MCF 10A (cell line): ENCODE measurements at regions of chr12 and their contacts with region 1.

Region 1: GRCh38 chr12:45543906-45544315 is 185.6 kb upstream of the ARID2 start:
- DNase-seq: peak; percentile 81
- H3K4me3 Mint-ChIP-seq: no peak overlapping the region
- H3K27ac Mint-ChIP-seq: no peak overlapping the region
- H3K4me1 Mint-ChIP-seq: no peaks in the 10 kb centered on the region
- H3K27me3 Mint-ChIP-seq: no peaks in the 10 kb centered on the region
- CTCF ChIP-seq: peak; percentile 83

Region 2: GRCh38 chr12:45490213-45490873 is 53.6 kb before region 1 on chr12:
- CTCF ChIA-PET with region 1: no interaction called
- POLR2A ChIA-PET with region 1: no interaction called
- intact Hi-C with region 1: no loop called
- DNase-seq: no peak
- H3K4me3 Mint-ChIP-seq: no peak overlapping the region
- H3K27ac Mint-ChIP-seq: no peak overlapping the region
- H3K4me1 Mint-ChIP-seq: no peaks in the 10 kb centered on the region
- H3K27me3 Mint-ChIP-seq: no peaks in the 10 kb centered on the region
- CTCF ChIP-seq: no peak

Region 3: GRCh38 chr12:45532113-45532512 is 11.8 kb before region 1 on chr12:
- CTCF ChIA-PET with region 1: interaction called, 20 read pairs
- POLR2A ChIA-PET with region 1: interaction called, 3 read pairs
- intact Hi-C with region 1: no loop called
- DNase-seq: no peak
- H3K4me3 Mint-ChIP-seq: no peak overlapping the region
- H3K27ac Mint-ChIP-seq: no peak overlapping the region
- H3K4me1 Mint-ChIP-seq: no peaks in the 10 kb centered on the region
- H3K27me3 Mint-ChIP-seq: no peaks in the 10 kb centered on the region
- CTCF ChIP-seq: no peak

Region 4: GRCh38 chr12:45703942-45704341 is 160.0 kb after region 1 on chr12:
- CTCF ChIA-PET with region 1: interaction called, 11 read pairs
- POLR2A ChIA-PET with region 1: no interaction called
- intact Hi-C with region 1: no loop called
- DNase-seq: peak; percentile 24
- H3K4me3 Mint-ChIP-seq: no peak overlapping the region
- H3K27ac Mint-ChIP-seq: no peak overlapping the region
- H3K4me1 Mint-ChIP-seq: peaks cover 5% of the 10 kb centered on the region
- H3K27me3 Mint-ChIP-seq: no peaks in the 10 kb centered on the region
- CTCF ChIP-seq: no peak

Region 5: DNA sequence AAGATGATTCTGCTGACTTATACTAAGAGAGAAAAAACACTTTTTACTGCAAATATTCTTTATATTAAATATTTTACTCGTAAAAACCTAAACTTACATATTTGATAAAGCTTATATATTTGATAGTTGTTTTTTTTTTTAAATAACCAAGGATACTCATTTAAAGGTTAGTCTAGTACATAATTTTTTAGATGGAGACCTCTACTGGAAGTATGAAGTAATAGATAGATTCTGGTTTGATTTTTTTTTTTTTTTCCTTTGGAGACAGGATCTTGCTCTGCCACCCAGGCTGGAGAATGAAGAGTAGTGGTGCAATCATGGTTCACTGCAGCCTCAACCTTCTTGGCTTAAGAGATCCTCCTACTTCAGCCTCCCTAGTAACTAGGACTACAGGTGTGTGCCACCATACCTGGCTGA is 202.0 kb after region 1 on chr12:
- CTCF ChIA-PET with region 1: interaction called, 44 read pairs
- POLR2A ChIA-PET with region 1: interaction called, 3 read pairs
- intact Hi-C with region 1: loop called (anchors 2 kb)
- DNase-seq: peak; percentile 27
- H3K4me3 Mint-ChIP-seq: no peak overlapping the region
- H3K27ac Mint-ChIP-seq: no peak overlapping the region
- H3K4me1 Mint-ChIP-seq: no peaks in the 10 kb centered on the region
- H3K27me3 Mint-ChIP-seq: no peaks in the 10 kb centered on the region
- CTCF ChIP-seq: peak; percentile 19

Region 6: GRCh38 chr12:45907955-45908354 is 364.0 kb after region 1 on chr12:
- CTCF ChIA-PET with region 1: no interaction called
- POLR2A ChIA-PET with region 1: no interaction called
- intact Hi-C with region 1: loop called (anchors 10 kb)
- DNase-seq: no peak
- H3K4me3 Mint-ChIP-seq: no peak overlapping the region
- H3K27ac Mint-ChIP-seq: no peak overlapping the region
- H3K4me1 Mint-ChIP-seq: no peaks in the 10 kb centered on the region
- H3K27me3 Mint-ChIP-seq: no peaks in the 10 kb centered on the region
- CTCF ChIP-seq: no peak

Region 7: DNA sequence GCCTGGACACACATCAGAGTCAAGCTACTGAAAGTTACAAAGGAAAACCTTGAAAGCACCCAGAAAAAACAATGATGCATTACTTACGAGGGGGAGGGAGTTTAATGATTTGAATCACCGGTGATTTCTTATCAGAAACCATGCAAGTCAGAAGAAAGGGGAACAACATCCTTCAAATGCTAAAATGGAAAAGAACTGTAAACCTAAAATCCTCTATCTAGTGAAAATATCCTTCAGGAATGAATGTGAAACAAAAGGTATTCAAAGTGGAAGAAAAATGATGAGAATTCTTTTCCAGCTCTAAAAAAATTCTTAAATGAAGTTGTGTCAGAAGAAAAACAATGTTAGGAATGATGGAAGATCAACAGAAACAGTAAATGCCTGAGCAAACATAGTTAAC is 429.6 kb after region 1 on chr12:
- CTCF ChIA-PET with region 1: no interaction called
- POLR2A ChIA-PET with region 1: no interaction called
- intact Hi-C with region 1: no loop called
- DNase-seq: no peak
- H3K4me3 Mint-ChIP-seq: no peak overlapping the region
- H3K27ac Mint-ChIP-seq: no peak overlapping the region
- H3K4me1 Mint-ChIP-seq: peaks cover 40% of the 10 kb centered on the region
- H3K27me3 Mint-ChIP-seq: no peaks in the 10 kb centered on the region
- CTCF ChIP-seq: no peak